ENCODE measurements at regions of chr15 and their contacts with region 1.

Region 1: GRCh38 chr15:83248151-83249029 is 36.1 kb downstream of the BNC1 start:
- DNase-seq: peak; percentile 29
- CTCF ChIP-seq: peak; percentile 64

Region 2: DNA sequence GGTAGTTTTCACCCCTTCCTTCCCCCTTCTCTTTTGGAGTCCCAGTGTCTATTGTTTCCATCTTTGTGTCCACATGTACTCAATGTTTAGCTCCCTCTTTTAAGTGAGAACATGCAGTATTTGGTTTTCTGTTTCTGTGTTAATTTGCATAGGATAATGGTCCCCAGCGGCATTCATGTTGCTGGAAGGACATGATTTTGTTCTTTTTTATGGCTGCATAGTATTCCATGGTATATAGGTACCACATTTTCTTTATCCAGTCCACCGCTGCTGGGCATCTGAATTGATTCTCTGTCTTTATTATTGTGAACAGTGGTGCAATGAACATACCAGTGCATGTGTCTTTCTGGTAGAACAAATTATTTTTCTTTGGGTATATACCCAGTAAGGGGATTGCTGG is 33.1 kb before region 1 on chr15:
- CTCF ChIA-PET with region 1: interaction called, 13 read pairs
- POLR2A ChIA-PET with region 1: no interaction called
- DNase-seq: no peak
- CTCF ChIP-seq: no peak

Region 3: DNA sequence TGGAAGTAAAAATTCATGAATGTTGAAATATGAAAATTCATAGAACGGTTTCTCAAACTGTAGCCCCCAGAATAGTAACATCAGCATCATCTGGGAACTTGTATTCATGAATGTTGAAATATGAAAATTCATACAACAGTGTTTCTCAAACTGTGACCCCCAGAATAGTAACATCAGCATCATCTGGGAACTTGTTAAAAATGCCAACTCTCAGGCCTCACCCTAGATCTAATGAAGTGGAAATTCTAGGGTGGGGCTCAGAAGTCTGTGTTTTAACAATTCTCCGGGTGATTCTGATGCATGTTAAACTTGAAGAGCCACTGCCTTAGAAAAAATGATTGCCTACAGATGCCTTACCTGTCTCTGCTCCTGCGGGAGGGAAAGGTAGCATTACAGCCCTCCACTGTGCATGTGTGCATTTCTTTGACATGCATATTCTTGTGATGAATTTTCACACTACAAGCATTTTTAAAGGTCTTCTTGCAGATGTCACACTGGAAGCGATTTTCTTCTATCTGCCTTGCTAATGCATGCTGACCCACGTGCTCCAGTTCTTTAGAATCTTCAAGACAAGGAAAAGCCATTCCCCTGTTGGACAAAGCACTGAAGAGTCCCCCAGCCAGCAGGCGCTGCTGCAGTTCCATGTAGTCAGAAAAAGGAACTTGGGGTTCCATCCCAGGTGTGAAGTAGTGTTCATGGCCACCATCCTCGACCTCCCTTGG is 14.4 kb after region 1 on chr15:
- CTCF ChIA-PET with region 1: interaction called, 32 read pairs
- POLR2A ChIA-PET with region 1: no interaction called
- DNase-seq: no peak
- CTCF ChIP-seq: no peak

Region 4: DNA sequence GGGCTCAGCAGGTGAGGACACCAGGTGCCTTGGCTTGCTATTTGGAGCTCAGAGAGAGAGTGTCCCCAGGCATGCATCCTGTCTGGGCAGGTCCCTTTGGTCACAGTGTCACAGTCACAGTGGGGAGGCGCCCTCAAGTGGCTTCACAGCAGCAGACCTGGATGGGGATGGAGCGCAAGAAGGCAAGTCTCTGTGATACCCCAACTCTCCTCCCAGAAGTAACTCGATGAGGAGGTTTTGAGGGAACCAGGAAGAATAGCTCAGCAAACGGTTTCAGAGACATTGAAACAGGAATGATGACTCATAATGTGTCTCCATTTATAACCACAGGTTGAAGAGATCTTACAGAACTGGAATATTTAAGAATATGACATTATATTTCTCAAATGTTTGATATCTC is 132.3 kb after region 1 on chr15:
- CTCF ChIA-PET with region 1: interaction called, 23 read pairs
- POLR2A ChIA-PET with region 1: no interaction called
- DNase-seq: peak; percentile 74
- CTCF ChIP-seq: peak; percentile 77

Region 5: GRCh38 chr15:83445643-83446042 is 197.3 kb after region 1 on chr15:
- CTCF ChIA-PET with region 1: no interaction called
- POLR2A ChIA-PET with region 1: no interaction called
- DNase-seq: no peak
- CTCF ChIP-seq: no peak

Region 6: GRCh38 chr15:83559310-83559966 is 311.0 kb after region 1 on chr15:
- CTCF ChIA-PET with region 1: interaction called, 55 read pairs
- POLR2A ChIA-PET with region 1: no interaction called
- DNase-seq: peak; percentile 68
- CTCF ChIP-seq: peak; percentile 87

Region 7: GRCh38 chr15:84057714-84058331 is 809.4 kb after region 1 on chr15:
- CTCF ChIA-PET with region 1: no interaction called
- POLR2A ChIA-PET with region 1: no interaction called
- DNase-seq: no peak
- CTCF ChIP-seq: no peak